ENCODE measurements at regions of chr10 and their contacts with region 1.

Region 1: GRCh38 chr10:92087750-92088395 is 164.3 kb downstream of the BTAF1 start:
- DNase-seq: peak; percentile 74 to 87 (median 80)
- ATAC-seq: peak; percentile 93
- H3K4me3 ChIP-seq: no peak overlapping the region
- H3K27ac ChIP-seq: peak overlapping the region in 1 of 4 donors; percentile 4
- H3K4me1 ChIP-seq: peaks cover 12% of the 10 kb centered on the region
- H3K27me3 ChIP-seq: no peaks in the 10 kb centered on the region
- CTCF ChIP-seq: peak; percentile 63 to 99 (median 93)
- POLR2A ChIP-seq: no peak

Region 2: GRCh38 chr10:91932737-91933136 is 155.1 kb before region 1 on chr10:
- intact Hi-C with region 1: no loop called
- DNase-seq: no peak
- ATAC-seq: no peak
- H3K4me3 ChIP-seq: no peak overlapping the region
- H3K27ac ChIP-seq: no peak overlapping the region
- H3K4me1 ChIP-seq: peaks cover 22% of the 10 kb centered on the region
- H3K27me3 ChIP-seq: no peaks in the 10 kb centered on the region
- CTCF ChIP-seq: no peak
- POLR2A ChIP-seq: no peak

Region 3: GRCh38 chr10:91974960-91975359 is 112.9 kb before region 1 on chr10:
- intact Hi-C with region 1: no loop called
- DNase-seq: no peak
- ATAC-seq: no peak
- H3K4me3 ChIP-seq: no peak overlapping the region
- H3K27ac ChIP-seq: no peak overlapping the region
- H3K4me1 ChIP-seq: no peaks in the 10 kb centered on the region
- H3K27me3 ChIP-seq: no peaks in the 10 kb centered on the region
- CTCF ChIP-seq: no peak
- POLR2A ChIP-seq: no peak

Region 4: DNA sequence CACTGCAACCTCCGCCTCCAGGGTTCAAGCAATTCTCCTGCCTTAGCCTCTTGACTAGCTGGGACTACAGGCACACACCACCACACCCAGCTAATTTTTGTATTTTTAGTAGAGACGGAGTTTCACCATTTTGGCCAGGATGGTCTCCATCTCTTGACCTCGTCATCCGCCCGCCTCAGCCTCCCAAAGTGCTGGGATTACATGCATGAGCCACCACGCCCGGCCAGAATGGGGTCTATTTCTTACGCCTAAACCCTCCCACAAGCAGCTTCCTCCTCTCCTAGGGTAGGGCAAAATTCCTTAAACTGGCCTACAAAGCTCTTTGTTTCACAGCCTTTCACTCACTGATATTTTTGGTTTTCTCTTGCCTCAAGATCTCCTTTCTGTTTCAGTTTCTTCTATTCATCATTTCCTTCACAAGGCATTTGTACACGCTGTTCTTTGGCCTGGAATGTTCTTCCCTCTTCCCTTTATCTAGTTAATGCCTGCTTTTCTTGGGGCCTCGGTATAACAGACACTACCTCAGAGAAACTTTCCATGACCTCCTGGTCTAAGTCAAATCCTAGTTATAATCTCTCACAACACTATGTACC is 196.3 kb after region 1 on chr10:
- intact Hi-C with region 1: loop called (anchors 10 kb)
- DNase-seq: no peak
- ATAC-seq: no peak
- H3K4me3 ChIP-seq: no peak overlapping the region
- H3K27ac ChIP-seq: peak overlapping the region in 2 of 4 donors; percentile 9 to 26
- H3K4me1 ChIP-seq: no peaks in the 10 kb centered on the region
- H3K27me3 ChIP-seq: no peaks in the 10 kb centered on the region
- CTCF ChIP-seq: no peak
- POLR2A ChIP-seq: no peak

Region 5: DNA sequence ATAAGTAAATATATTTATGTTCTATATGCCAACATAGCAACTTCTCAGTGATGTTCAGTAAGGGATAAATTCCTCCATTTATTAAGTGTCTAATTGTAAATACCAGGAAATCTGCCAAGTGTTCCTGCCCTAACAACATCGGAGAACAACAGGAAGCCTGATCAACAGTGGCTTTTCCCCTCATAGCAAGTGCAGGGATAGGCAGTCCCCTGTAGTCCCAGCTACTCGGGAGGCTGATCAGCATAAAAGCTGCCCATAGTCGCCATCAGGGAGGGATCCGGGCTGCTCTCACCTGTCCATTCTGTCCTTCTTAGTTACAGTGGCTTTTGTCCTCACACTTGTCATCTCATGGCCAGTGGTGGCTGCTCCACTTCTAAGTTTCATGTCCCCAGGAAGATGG is 344.7 kb after region 1 on chr10:
- intact Hi-C with region 1: loop called (anchors 10 kb)
- DNase-seq: no peak
- ATAC-seq: no peak
- H3K4me3 ChIP-seq: no peak overlapping the region
- H3K27ac ChIP-seq: no peak overlapping the region
- H3K4me1 ChIP-seq: no peaks in the 10 kb centered on the region
- H3K27me3 ChIP-seq: no peaks in the 10 kb centered on the region
- CTCF ChIP-seq: no peak
- POLR2A ChIP-seq: no peak